ENCODE measurements at regions of chr5 and their contacts with region 1.

Region 1: GRCh38 chr5:61348447-61348846 is 16.4 kb downstream of the ZSWIM6 start:
- DNase-seq: no peak
- ATAC-seq: no peak
- H3K4me3 ChIP-seq: no peak overlapping the region
- H3K4me3 Mint-ChIP-seq: no peak overlapping the region
- H3K27ac ChIP-seq: no peak overlapping the region
- H3K27ac Mint-ChIP-seq: no peak overlapping the region
- H3K4me1 ChIP-seq: no peaks in the 10 kb centered on the region
- H3K4me1 Mint-ChIP-seq: peaks cover 55 to 70% (median 62%) of the 10 kb centered on the region in 3 donors
- H3K27me3 ChIP-seq: no peaks in the 10 kb centered on the region
- H3K27me3 Mint-ChIP-seq: no peaks in the 10 kb centered on the region

Region 2: GRCh38 chr5:61115968-61116367 is 232.5 kb before region 1 on chr5:
- CTCF ChIA-PET with region 1: no interaction called
- POLR2A ChIA-PET with region 1: no interaction called
- DNase-seq: no peak
- ATAC-seq: no peak
- H3K4me3 ChIP-seq: no peak overlapping the region
- H3K4me3 Mint-ChIP-seq: no peak overlapping the region
- H3K27ac ChIP-seq: no peak overlapping the region
- H3K27ac Mint-ChIP-seq: no peak overlapping the region
- H3K4me1 ChIP-seq: no peaks in the 10 kb centered on the region
- H3K4me1 Mint-ChIP-seq: peaks cover 0 to 4% (median 0%) of the 10 kb centered on the region in 3 donors
- H3K27me3 ChIP-seq: no peaks in the 10 kb centered on the region
- H3K27me3 Mint-ChIP-seq: no peaks in the 10 kb centered on the region

Region 3: GRCh38 chr5:61409568-61409967 is 61.1 kb after region 1 on chr5:
- CTCF ChIA-PET with region 1: no interaction called
- POLR2A ChIA-PET with region 1: no interaction called
- DNase-seq: no peak
- ATAC-seq: no peak
- H3K4me3 ChIP-seq: no peak overlapping the region
- H3K4me3 Mint-ChIP-seq: peak overlapping the region in 1 of 3 donors; percentile 61
- H3K27ac ChIP-seq: no peak overlapping the region
- H3K27ac Mint-ChIP-seq: no peak overlapping the region
- H3K4me1 ChIP-seq: peaks cover 3 to 12% of the 10 kb centered on the region in 2 experiments
- H3K4me1 Mint-ChIP-seq: peaks cover 41 to 42% (median 41%) of the 10 kb centered on the region in 3 donors
- H3K27me3 ChIP-seq: no peaks in the 10 kb centered on the region
- H3K27me3 Mint-ChIP-seq: no peaks in the 10 kb centered on the region

Region 4: DNA sequence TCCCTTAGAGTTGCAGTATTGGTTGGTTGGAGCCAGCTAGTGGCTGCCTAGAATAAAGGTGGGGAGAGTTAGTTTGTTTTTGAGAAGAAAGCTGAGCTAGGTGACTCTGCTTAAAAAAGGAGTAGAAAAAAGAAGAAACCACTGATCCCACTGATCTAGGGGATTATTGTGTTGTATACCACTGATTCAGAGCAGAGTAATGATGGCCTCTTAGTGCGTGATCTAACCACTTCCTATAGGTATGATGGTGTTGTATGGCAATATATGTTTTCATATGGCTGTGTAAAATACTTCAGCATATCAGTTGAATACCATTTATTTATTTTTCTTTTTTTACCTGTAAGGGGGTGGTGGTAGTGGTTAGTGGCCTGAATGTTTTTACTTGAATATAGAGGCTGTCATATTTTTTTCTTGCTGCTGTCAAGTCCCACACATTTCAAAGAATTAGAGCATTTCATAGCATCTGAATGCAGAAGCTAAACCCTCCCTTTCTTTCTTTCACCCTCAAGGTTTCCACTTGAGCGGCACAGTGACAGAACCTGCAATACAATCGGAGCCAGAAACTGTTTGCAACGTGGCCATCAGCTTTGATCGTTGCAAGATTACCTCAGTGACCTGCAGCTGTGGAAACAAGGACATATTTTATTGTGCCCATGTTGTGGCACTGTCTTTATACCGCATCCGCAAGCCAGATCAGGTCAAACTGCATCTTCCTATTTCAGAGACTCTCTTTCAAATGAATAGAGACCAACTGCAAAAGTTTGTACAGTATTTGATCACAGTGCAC is 123.9 kb after region 1 on chr5:
- CTCF ChIA-PET with region 1: no interaction called
- POLR2A ChIA-PET with region 1: interaction called in 1 of 2 experiments, 10 read pairs
- DNase-seq: peak in 1 of 35 experiments; percentile 4
- ATAC-seq: peak in 1 of 4 experiments; percentile 62
- H3K4me3 ChIP-seq: no peak overlapping the region
- H3K4me3 Mint-ChIP-seq: no peak overlapping the region
- H3K27ac ChIP-seq: no peak overlapping the region
- H3K27ac Mint-ChIP-seq: peak overlapping the region in 1 of 2 donors; percentile 18
- H3K4me1 ChIP-seq: peaks cover 2 to 3% of the 10 kb centered on the region in 2 experiments
- H3K4me1 Mint-ChIP-seq: peaks cover 43 to 51% (median 51%) of the 10 kb centered on the region in 3 donors
- H3K27me3 ChIP-seq: no peaks in the 10 kb centered on the region
- H3K27me3 Mint-ChIP-seq: no peaks in the 10 kb centered on the region